HCT116 (cell line): ENCODE measurements at regions of chr17 and their contacts with region 1.

Region 1: DNA sequence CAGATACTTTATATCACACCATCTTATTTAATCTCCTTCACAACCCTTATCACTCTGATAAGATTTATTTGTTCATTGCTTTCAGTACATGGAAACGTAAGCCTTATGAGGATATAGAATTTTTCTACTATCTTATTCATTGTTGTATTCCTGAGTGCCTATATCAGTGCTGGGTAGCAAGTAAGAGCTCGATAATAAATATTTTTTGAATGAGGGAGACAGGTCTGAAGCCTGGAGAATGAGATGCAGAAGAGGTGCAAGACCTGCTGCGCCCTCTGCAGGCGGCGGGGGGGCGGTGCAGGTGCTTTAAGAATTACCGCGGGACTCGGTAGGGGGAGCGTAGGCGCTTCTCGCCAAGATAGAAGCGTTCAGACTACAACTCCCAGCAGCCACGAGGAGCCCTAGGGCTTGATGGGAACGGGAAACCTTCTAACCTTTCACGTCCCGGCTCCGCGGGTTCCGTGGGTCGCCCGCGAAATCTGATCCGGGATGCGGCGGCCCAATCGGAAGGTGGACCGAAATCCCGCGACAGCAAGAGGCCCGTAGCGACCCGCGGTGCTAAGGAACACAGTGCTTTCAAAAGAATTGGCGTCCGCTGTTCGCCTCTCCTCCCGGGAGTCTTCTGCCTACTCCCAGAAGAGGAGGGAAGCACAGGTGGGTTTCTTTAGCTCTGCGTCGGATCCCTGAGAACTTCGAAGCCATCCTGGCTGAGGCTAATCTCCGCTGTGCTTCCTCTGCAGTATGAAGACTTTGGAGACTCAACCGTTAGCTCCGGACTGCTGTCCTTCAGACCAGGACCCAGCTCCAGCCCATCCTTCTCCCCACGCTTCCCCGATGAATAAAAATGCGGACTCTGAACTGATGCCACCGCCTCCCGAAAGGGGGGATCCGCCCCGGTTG is at the start of gene WRAP53:
- DNase-seq: peak; percentile 99
- ATAC-seq: peak; percentile 91
- H3K4me3 ChIP-seq: peak within 1 kb of the TSS; percentile 86 to 100
- H3K27ac ChIP-seq: peak within 1 kb of the TSS; percentile 89
- H3K4me1 ChIP-seq: peaks cover 26 to 33% of the 10 kb centered on the region in 2 experiments
- H3K27me3 ChIP-seq: no peaks in the 10 kb centered on the region
- CTCF ChIP-seq: peak; percentile 93 to 99 (median 99)
- POLR2A ChIP-seq: peak; percentile 73
- RAD21 ChIP-seq: peak; percentile 87
- total RNA-seq, gene WRAP53: 28.8 TPM

Region 2: DNA sequence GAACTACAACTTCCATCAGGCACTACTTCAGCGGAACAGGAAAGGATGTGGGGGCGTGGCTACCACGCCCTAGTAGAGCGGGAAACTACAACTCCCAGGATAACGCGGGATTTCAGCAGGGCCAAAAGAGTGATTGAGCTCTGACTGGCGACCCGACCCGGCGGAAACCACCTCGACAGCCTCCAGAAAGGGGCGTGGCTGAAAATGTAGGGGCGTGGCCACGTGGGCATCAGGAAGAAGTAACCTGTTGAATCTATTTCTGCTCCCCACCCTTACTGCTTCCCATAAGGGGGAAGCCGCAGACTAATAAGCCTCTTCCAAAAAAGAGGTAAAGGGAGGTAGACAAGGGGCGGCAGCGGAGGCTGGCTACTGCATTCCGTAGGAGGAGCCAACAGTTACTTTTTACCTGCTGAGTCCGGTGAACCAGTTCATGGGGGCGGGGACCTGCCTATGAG is 252.9 kb before region 1 on chr17 and contains the start of gene TMEM102:
- CTCF ChIA-PET with region 1: interaction called, 3 read pairs
- POLR2A ChIA-PET with region 1: interaction called, 15 read pairs
- RAD21 ChIA-PET with region 1: no interaction called
- intact Hi-C with region 1: loop called (anchors 2 kb)
- DNase-seq: peak; percentile 98
- ATAC-seq: peak; percentile 79
- H3K4me3 ChIP-seq: peak within 1 kb of the TSS; percentile 69 to 85
- H3K27ac ChIP-seq: peak within 1 kb of the TSS; percentile 95
- H3K4me1 ChIP-seq: peaks cover 13 to 32% of the 10 kb centered on the region in 2 experiments
- H3K27me3 ChIP-seq: no peaks in the 10 kb centered on the region
- CTCF ChIP-seq: no peak
- POLR2A ChIP-seq: peak; percentile 53
- RAD21 ChIP-seq: no peak
- total RNA-seq, gene TMEM102: 16.4 TPM

Region 3: DNA sequence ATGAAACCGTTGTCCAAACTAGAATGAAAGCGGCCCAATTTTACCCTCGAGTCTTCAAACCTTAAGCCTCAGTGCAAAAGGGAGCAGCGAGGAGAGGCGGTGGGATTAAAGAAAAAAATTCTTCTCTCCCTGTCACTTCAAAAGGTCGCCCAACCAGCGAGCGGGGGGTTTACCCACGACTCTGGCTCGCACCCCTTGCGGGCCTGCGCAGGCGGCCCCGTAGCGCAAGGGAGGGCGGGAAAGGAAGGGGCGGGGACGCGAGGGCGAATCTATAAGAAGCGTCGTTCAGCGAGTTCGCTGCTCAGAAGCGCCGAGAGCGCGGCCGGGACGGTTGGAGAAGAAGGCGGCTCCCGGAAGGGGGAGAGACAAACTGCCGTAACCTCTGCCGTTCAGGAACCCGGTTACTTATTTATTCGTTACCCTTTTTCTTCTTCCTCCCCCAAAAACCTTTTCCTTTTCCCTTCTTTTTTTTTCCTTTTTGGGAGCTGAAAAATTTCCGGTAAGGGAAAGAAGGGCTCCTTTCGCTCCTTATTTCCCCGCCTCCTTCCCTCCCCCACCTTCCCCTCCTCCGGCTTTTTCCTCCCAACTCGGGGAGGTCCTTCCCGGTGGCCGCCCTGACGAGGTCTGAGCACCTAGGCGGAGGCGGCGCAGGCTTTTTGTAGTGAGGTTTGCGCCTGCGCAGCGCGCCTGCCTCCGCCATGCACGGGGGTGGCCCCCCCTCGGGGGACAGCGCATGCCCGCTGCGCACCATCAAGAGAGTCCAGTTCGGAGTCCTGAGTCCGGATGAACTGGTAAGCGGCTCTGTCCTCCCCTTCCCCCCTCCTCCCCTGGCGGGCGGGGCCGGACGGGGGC is 203.9 kb before region 1 on chr17 and contains the start of gene POLR2A:
- CTCF ChIA-PET with region 1: no interaction called
- POLR2A ChIA-PET with region 1: no interaction called
- RAD21 ChIA-PET with region 1: no interaction called
- intact Hi-C with region 1: no loop called
- DNase-seq: peak; percentile 92
- ATAC-seq: peak; percentile 78
- H3K4me3 ChIP-seq: peak within 1 kb of the TSS; percentile 95 to 100
- H3K27ac ChIP-seq: peak within 1 kb of the TSS; percentile 87
- H3K4me1 ChIP-seq: peaks cover 12 to 52% of the 10 kb centered on the region in 2 experiments; a peak in 3 of 4 replicates
- H3K27me3 ChIP-seq: no peaks in the 10 kb centered on the region
- CTCF ChIP-seq: no peak
- POLR2A ChIP-seq: peak; percentile 100
- RAD21 ChIP-seq: no peak
- total RNA-seq, gene POLR2A: 205 TPM

Region 4: DNA sequence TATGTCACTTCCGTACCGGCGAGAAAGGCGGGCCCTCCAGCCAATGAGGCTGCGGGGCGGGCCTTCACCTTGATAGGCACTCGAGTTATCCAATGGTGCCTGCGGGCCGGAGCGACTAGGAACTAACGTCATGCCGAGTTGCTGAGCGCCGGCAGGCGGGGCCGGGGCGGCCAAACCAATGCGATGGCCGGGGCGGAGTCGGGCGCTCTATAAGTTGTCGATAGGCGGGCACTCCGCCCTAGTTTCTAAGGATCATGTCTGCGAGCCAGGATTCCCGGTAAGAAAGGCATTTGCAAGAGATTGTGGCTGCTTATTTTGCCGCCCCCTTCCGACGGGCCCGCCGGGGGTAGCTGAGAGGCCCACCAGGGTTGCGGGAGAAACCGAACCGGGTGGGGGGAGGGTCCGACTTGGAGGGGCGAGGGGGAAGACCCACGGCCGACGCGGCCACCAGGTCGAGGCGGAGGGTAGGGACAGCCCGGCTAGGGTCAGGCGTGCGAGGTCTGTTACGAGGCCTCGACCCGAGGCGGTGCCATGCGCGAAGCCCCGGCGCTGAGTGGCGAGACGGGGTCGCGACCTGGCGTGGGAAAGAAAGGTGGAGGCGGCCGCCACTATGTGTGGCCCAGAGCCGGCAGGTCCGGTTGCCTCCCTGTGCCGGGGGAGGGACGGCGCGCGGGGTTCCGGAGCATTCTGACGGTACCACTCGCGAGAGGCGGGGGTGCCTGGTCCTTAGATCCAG is 115.4 kb before region 1 on chr17:
- CTCF ChIA-PET with region 1: interaction called, 3 read pairs
- POLR2A ChIA-PET with region 1: interaction called, 13 read pairs
- RAD21 ChIA-PET with region 1: no interaction called
- intact Hi-C with region 1: no loop called
- DNase-seq: peak; percentile 98
- ATAC-seq: peak; percentile 86
- H3K4me3 ChIP-seq: peak overlapping the region; percentile 94 to 100
- H3K27ac ChIP-seq: peak overlapping the region; percentile 97
- H3K4me1 ChIP-seq: peaks cover 5 to 58% of the 10 kb centered on the region in 2 experiments; a peak in 3 of 4 replicates
- H3K27me3 ChIP-seq: no peaks in the 10 kb centered on the region
- CTCF ChIP-seq: no peak
- POLR2A ChIP-seq: peak; percentile 99
- RAD21 ChIP-seq: no peak

Region 5: GRCh38 chr17:7614422-7615264 is 73.5 kb before region 1 on chr17 and contains the start of gene FXR2:
- CTCF ChIA-PET with region 1: interaction called, 16 read pairs
- POLR2A ChIA-PET with region 1: interaction called, 27 read pairs
- RAD21 ChIA-PET with region 1: interaction called in 1 of 2 experiments, 3 read pairs
- intact Hi-C with region 1: loop called (anchors 2 kb)
- DNase-seq: peak; percentile 100
- ATAC-seq: peak; percentile 93
- H3K4me3 ChIP-seq: peak within 1 kb of the TSS; percentile 64 to 87
- H3K27ac ChIP-seq: peak within 1 kb of the TSS; percentile 96
- H3K4me1 ChIP-seq: peaks cover 12 to 22% of the 10 kb centered on the region in 2 experiments
- H3K27me3 ChIP-seq: no peaks in the 10 kb centered on the region
- CTCF ChIP-seq: peak; percentile 55 to 86 (median 65)
- POLR2A ChIP-seq: no peak
- RAD21 ChIP-seq: no peak
- total RNA-seq, gene FXR2: 49.7 TPM

Region 6: GRCh38 chr17:7632492-7632894 is 55.7 kb before region 1 on chr17:
- CTCF ChIA-PET with region 1: interaction called, 54 read pairs
- POLR2A ChIA-PET with region 1: interaction called, 31 read pairs
- RAD21 ChIA-PET with region 1: interaction called, 3 to 5 read pairs
- intact Hi-C with region 1: loop called (anchors 1 kb)
- DNase-seq: peak; percentile 54
- ATAC-seq: peak; percentile 74
- H3K4me3 ChIP-seq: no peak overlapping the region
- H3K27ac ChIP-seq: no peak overlapping the region
- H3K4me1 ChIP-seq: peaks cover 4 to 10% of the 10 kb centered on the region in 2 experiments; a peak in 3 of 4 replicates
- H3K27me3 ChIP-seq: no peaks in the 10 kb centered on the region
- CTCF ChIP-seq: peak; percentile 58 to 67 (median 60); a peak in 5 of 6 replicates
- POLR2A ChIP-seq: no peak
- RAD21 ChIP-seq: peak; percentile 69

Region 7: DNA sequence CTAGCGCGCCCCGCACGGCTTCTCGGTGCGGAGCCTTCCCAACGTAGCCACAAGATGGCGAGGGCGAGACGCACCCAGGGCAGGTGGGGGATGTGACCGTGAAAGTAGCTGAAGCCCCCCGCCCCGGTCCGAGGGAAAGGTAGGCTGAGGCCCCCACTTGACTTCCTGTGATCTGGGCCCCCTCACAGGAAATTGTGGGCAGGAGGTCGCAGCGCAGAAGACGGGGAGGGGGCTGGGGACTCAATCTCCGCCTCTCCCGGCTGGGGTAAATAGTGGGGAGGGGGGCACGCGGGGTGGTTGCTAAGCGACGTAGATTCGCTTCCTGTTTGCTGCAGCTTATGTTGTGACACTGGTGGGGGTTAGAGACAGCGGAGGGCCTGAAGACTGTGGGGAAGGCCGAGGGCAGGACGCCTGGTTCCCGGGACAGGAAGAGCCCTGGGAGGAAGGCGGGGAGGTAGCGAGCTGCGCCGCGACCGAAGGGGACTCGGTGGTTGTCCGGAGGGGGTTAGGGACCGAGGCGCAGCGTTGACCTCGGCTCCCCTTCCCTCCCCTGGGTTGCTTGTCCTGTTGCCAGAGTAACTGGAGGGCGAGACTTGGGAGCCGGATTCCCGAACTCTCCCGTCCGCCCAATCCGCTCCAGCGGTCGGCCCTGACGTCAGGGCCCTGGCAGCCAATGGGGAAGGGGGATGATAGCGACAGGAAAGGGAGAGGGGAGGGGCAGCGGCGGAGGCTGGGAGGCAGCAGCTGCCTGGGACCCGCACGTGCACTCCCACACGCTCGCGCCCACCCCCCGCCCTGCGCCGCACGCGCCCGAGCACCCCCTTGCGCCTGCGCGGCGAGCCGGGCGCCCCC is 147.0 kb after region 1 on chr17:
- CTCF ChIA-PET with region 1: no interaction called
- POLR2A ChIA-PET with region 1: no interaction called
- RAD21 ChIA-PET with region 1: no interaction called
- intact Hi-C with region 1: no loop called
- DNase-seq: peak; percentile 98
- ATAC-seq: peak; percentile 69
- H3K4me3 ChIP-seq: peak overlapping the region; percentile 74 to 82
- H3K27ac ChIP-seq: peak overlapping the region; percentile 98
- H3K4me1 ChIP-seq: peaks cover 32 to 64% of the 10 kb centered on the region in 2 experiments
- H3K27me3 ChIP-seq: no peaks in the 10 kb centered on the region
- CTCF ChIP-seq: peak in 2 of 3 experiments; percentile 70 to 85; a peak in 4 of 6 replicates
- POLR2A ChIP-seq: peak; percentile 60
- RAD21 ChIP-seq: no peak